ENCODE measurements at regions of chr19 and their contacts with region 1.

Region 1: DNA sequence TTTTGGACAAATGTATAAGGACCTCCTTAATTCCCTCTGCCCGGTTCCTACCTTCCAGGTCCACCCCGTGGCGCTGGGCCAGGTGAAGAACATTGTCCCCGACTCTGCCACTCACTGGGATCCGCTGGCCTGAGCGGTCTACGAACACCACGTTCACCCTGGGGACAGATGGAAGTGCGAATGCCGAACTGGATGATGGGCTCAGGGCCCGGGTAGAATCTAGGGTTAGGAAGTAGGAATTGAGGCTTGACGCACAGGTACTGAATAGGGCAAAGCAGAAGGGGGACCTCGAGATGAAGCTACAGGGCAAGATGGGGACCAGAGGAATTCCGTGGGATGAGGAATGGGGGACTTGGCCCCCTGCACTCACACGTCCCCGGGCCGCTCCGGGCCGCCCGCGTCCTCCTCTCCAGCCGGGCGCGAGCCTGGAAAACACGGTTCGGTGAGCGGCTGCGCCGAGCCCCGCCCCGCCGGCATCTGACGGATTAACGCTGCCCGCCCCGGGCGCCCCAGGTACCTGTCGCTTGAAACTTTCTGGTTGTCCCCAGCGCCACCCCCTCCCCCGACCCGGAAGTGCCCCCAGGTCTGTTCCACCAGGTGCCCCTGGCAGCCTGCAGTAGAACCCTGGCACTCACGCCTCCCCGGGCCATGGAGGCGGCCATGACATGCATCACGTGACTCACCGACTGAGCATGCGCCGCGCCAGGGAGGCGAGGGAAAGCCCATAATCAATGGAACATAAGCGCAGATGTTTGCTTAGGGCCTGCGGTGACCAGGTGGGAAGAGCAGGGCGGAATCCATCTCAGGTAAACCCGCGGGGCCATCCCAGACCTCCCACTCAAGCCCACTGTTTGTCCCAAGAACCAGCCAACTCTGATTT is at the start of gene FDX2:
- DNase-seq: peak; percentile 87
- H3K4me3 Mint-ChIP-seq: peak within 1 kb of the TSS; percentile 94
- H3K27ac Mint-ChIP-seq: peak within 1 kb of the TSS; percentile 86
- H3K4me1 Mint-ChIP-seq: peaks cover 22% of the 10 kb centered on the region
- H3K27me3 Mint-ChIP-seq: no peaks in the 10 kb centered on the region
- total RNA-seq, gene FDX2: 21.6 and 24.4 TPM in 2 replicates

Region 2: DNA sequence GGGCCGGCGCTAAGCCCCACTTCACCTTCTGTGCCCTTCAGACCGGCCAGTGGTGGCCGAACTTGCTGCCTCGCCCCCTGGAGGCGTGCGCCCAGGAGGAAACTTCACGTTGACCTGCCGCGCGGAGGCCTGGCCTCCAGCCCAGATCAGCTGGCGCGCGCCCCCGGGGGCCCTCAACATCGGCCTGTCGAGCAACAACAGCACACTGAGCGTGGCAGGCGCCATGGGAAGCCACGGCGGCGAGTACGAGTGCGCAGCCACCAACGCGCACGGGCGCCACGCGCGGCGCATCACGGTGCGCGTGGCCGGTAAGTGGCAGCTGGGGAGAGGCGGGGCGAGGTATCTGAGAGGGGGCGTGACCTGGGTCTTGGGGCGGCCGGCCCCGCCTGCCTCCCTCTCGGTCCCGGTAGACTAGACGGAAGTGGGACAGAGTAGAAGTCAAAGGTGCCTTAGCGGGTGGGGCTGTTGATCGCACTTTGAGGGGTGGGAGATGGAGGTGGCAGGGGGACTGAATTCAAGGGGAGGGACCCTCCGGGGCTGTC is 20.2 kb before region 1 on chr19:
- intact Hi-C with region 1: loop called (anchors 1 kb)
- DNase-seq: peak; percentile 73
- H3K4me3 Mint-ChIP-seq: peak overlapping the region; percentile 79
- H3K27ac Mint-ChIP-seq: peak overlapping the region; percentile 55
- H3K4me1 Mint-ChIP-seq: peaks cover 38% of the 10 kb centered on the region
- H3K27me3 Mint-ChIP-seq: peaks cover 52% of the 10 kb centered on the region

Region 3: GRCh38 chr19:10332955-10333757 is 17.6 kb after region 1 on chr19 and contains the start of gene RAVER1:
- intact Hi-C with region 1: loop called (anchors 1 kb)
- DNase-seq: peak; percentile 95
- H3K4me3 Mint-ChIP-seq: peak within 1 kb of the TSS; percentile 90
- H3K27ac Mint-ChIP-seq: peak within 1 kb of the TSS; percentile 95
- H3K4me1 Mint-ChIP-seq: peaks cover 11% of the 10 kb centered on the region
- H3K27me3 Mint-ChIP-seq: no peaks in the 10 kb centered on the region
- total RNA-seq, gene RAVER1: 92.5 and 92.8 TPM in 2 replicates